ENCODE measurements at regions of chr5 and their contacts with region 1.

Region 1: DNA sequence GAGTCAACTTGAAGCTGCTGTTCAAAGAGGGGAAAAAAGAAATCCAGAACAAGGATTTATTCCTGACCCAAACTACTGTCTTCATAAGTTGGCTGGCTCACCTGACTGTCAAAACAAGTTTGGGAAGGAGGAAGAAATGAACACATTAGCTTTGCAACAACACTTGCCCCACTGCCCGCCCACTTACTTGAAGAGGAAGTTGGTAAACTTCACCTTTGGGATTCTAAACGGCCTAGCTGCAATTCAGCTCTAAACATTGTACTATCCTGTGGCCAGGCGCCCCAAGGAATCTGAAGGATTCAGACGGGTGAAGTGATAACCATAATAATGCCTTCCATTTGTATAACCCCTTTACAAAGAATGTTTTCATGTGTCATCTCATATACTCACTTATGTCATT is 199.4 kb downstream of the ARRDC3 start:
- DNase-seq: peak in 1 of 2 experiments; percentile 9
- H3K4me3 ChIP-seq: no peak overlapping the region
- H3K27ac ChIP-seq: no peak overlapping the region
- H3K4me1 ChIP-seq: peaks cover 0 to 6% (median 2%) of the 10 kb centered on the region in 4 experiments; a peak in 2 of 7 replicates
- H3K27me3 ChIP-seq: no peaks in the 10 kb centered on the region
- CTCF ChIP-seq: no peak
- EP300 ChIP-seq: no peak
- POLR2A ChIP-seq: no peak
- RAD21 ChIP-seq: no peak

Region 2: GRCh38 chr5:91225848-91226686 is 42.3 kb after region 1 on chr5:
- CTCF ChIA-PET with region 1: interaction called, 22 read pairs
- POLR2A ChIA-PET with region 1: no interaction called
- DNase-seq: peak; percentile 15 to 77
- H3K4me3 ChIP-seq: no peak overlapping the region
- H3K27ac ChIP-seq: no peak overlapping the region
- H3K4me1 ChIP-seq: no peaks in the 10 kb centered on the region; a peak in 2 of 7 replicates
- H3K27me3 ChIP-seq: no peaks in the 10 kb centered on the region
- CTCF ChIP-seq: peak; percentile 63 to 95 (median 74)
- EP300 ChIP-seq: no peak
- POLR2A ChIP-seq: no peak
- RAD21 ChIP-seq: peak; percentile 93

Region 3: DNA sequence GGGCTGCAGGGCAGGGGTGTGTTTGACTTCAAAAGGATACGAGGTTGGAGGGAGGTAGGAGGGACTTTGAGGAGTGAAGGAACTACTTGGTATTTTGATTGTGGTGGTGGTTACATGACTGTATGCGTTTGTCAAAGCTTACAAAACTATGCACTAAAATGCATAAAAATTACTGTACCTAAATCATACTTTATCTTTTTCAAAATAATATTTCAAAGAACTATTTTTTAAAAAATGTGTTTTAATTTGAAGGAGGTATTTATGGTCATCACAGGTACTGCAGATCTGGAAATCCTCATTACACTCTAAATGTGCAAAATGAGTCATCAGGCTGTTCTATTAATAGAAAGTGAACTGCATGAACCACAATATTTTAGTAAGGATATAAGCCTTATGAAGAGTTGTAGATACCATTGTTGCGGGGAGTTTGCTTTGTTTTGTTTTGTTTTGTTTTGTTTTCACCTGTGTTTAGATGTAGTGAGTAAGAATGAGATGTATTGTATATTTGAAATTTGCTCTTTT is 82.5 kb after region 1 on chr5:
- CTCF ChIA-PET with region 1: no interaction called
- POLR2A ChIA-PET with region 1: no interaction called
- DNase-seq: no peak
- H3K4me3 ChIP-seq: no peak overlapping the region
- H3K27ac ChIP-seq: no peak overlapping the region
- H3K4me1 ChIP-seq: peaks cover 0 to 4% (median 0%) of the 10 kb centered on the region in 4 experiments; a peak in 1 of 7 replicates
- H3K27me3 ChIP-seq: no peaks in the 10 kb centered on the region
- CTCF ChIP-seq: no peak
- EP300 ChIP-seq: no peak
- POLR2A ChIP-seq: no peak
- RAD21 ChIP-seq: no peak